Sciatic nerve (tissue), 2 donors: ENCODE measurements at regions of chr20 and their contacts with region 1.

Region 1: GRCh38 chr20:51789434-51789833 is 12.9 kb downstream of the SALL4 start:
- DNase-seq: no peak
- ATAC-seq: no peak

Region 2: GRCh38 chr20:51447097-51447771 is 342.2 kb before region 1 on chr20:
- intact Hi-C with region 1: no loop called
- DNase-seq: peak; percentile 79
- ATAC-seq: peak; percentile 70

Region 3: DNA sequence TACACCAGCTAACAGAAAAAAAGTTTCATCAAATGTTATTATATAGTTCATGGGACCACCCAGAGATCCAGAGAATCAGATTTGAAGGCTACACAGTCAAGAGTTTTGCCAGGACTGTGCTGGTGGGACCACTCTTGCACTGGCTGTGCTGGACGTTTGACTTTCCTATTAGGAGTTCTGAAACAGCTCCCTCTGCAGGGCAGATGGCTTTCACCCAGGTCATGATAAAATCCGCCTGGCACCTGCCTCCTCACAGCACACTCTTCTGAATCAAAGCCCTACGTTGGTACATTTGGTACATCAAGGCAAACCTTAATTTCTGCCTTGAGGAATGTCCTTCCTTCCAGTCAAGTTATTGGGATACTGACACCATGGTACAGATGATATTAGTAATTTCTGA is 1502.1 kb after region 1 on chr20:
- intact Hi-C with region 1: loop called (anchors 5 kb)
- DNase-seq: no peak
- ATAC-seq: no peak